AG04450 (cell line): ENCODE measurements at regions of chr13 and their contacts with region 1.

Region 1: GRCh38 chr13:30865123-30866049 is 40.7 kb upstream of the MEDAG start:
- DNase-seq: peak; percentile 91
- H3K4me3 ChIP-seq: peak overlapping the region; percentile 45
- H3K27ac ChIP-seq: peak overlapping the region; percentile 100
- H3K27me3 ChIP-seq: no peaks in the 10 kb centered on the region
- CTCF ChIP-seq: peak; percentile 95

Region 2: DNA sequence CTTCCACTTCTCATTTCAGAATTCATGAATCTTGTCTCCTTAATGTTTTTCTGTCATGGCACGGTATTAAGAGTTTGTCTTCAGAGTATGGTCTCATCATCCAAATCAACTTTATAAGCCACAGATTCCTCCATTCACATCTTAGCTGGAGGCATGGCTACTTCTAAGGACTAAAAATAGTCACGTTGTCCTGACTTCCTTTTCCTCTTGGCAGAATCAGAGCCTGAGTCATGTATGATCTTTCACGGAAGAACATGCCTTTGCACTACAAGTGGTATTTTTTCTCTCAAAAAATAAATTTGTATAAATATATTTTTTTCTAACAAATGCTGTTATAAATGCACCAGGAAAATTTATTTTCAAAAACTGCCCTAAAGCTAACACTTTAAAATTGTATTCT is 58.6 kb before region 1 on chr13:
- CTCF ChIA-PET with region 1: interaction called, 10 read pairs
- POLR2A ChIA-PET with region 1: interaction called, 3 read pairs
- DNase-seq: no peak
- H3K4me3 ChIP-seq: no peak overlapping the region
- H3K27ac ChIP-seq: no peak overlapping the region
- H3K27me3 ChIP-seq: no peaks in the 10 kb centered on the region
- CTCF ChIP-seq: no peak

Region 3: DNA sequence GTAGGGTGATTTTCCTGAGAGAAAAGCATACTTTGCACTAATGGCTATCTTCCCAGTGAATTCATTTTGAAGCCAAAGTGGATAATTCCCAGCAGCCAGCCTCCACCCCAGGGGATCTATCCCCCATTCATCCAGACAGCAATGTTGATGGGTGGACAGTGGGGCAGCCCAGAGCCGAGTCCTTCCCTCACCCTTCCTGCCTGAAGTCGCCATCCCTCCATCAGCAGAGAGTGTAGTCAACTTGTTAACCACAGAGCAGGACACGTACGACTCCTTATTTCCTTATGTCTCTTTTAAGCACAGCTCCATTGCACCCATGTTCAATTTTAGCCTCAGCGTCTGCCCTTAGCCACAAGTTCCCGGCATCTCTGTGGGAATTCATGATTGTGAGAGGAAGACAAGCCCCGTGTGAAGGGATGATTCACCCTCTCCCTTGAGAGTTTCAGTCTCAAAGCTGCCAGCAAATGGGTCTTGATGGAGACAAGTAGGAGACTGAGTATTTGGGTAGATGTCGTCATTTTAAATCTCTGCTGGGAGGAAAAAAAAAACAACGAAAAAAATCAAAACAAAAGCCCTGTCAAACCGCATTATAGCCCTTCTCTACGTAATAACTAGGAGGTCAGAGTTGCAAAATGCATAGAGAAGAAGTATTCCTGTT is 17.6 kb before region 1 on chr13:
- CTCF ChIA-PET with region 1: interaction called, 11 read pairs
- POLR2A ChIA-PET with region 1: interaction called, 13 read pairs
- DNase-seq: peak; percentile 93
- H3K4me3 ChIP-seq: peak overlapping the region; percentile 21
- H3K27ac ChIP-seq: peak overlapping the region; percentile 97
- H3K27me3 ChIP-seq: no peaks in the 10 kb centered on the region
- CTCF ChIP-seq: no peak

Region 4: DNA sequence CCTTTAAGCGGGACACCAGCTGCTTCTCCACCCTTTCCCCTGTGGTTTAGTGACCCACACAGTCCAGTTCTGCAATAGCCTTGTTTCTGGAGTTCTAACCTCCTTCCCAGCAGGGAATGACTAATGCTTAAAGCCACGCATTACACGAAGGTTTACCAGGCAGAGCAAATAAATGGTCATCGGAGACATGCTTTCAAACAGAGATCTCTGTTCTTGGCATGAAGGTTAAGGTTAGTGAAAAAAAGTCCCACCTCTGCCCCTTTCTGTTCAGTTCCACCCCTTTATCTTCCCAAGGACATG is 15.4 kb after region 1 on chr13:
- CTCF ChIA-PET with region 1: interaction called, 10 read pairs
- POLR2A ChIA-PET with region 1: interaction called, 20 read pairs
- DNase-seq: peak; percentile 81
- H3K4me3 ChIP-seq: no peak overlapping the region
- H3K27ac ChIP-seq: peak overlapping the region; percentile 72
- H3K27me3 ChIP-seq: no peaks in the 10 kb centered on the region
- CTCF ChIP-seq: no peak

Region 5: DNA sequence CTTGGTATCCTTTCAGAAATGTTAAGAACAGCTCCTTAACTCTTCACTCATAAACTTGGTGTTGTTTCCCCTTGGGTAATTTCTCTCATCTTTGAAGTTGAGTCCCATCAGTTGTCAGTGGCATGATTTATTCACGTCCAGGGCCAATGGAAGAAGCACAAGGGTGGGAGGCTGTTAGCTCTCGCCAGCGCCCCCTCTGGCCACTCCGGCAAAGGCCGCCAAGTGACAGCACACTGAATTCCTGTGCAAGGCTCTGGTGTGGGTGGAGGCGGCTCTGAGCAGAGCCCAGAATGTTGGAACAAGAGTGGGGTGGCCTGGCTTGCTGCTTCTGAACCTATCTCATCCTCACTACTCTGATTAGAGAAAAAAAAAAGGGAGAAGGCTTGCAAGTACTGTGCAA is 27.6 kb after region 1 on chr13:
- CTCF ChIA-PET with region 1: interaction called, 27 read pairs
- POLR2A ChIA-PET with region 1: no interaction called
- DNase-seq: no peak
- H3K4me3 ChIP-seq: no peak overlapping the region
- H3K27ac ChIP-seq: no peak overlapping the region
- H3K27me3 ChIP-seq: no peaks in the 10 kb centered on the region
- CTCF ChIP-seq: peak; percentile 60

Region 6: DNA sequence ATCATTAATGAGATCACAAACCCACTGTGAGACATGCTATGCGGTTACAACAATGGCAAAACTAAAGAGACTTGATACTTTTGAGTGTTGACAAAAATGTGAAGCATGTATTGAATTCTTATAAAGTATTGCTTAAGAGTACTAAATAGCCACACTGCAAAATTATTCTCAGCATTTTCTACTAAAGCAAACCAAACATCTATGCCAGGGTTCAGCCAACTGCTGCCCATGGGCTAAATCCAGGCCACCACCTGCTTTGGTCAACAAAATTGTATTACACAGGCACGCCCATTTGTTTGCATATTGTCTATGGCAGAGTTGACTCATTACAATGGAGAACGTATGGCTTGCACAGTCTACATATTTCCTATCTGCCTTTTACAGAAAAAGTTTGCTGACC is 469.7 kb after region 1 on chr13:
- CTCF ChIA-PET with region 1: no interaction called
- POLR2A ChIA-PET with region 1: no interaction called
- DNase-seq: no peak
- H3K4me3 ChIP-seq: no peak overlapping the region
- H3K27ac ChIP-seq: no peak overlapping the region
- H3K27me3 ChIP-seq: no peaks in the 10 kb centered on the region
- CTCF ChIP-seq: no peak